Cardiac septum (tissue), 1 donor: ENCODE measurements at regions of chr6 and their contacts with region 1.

Region 1: DNA sequence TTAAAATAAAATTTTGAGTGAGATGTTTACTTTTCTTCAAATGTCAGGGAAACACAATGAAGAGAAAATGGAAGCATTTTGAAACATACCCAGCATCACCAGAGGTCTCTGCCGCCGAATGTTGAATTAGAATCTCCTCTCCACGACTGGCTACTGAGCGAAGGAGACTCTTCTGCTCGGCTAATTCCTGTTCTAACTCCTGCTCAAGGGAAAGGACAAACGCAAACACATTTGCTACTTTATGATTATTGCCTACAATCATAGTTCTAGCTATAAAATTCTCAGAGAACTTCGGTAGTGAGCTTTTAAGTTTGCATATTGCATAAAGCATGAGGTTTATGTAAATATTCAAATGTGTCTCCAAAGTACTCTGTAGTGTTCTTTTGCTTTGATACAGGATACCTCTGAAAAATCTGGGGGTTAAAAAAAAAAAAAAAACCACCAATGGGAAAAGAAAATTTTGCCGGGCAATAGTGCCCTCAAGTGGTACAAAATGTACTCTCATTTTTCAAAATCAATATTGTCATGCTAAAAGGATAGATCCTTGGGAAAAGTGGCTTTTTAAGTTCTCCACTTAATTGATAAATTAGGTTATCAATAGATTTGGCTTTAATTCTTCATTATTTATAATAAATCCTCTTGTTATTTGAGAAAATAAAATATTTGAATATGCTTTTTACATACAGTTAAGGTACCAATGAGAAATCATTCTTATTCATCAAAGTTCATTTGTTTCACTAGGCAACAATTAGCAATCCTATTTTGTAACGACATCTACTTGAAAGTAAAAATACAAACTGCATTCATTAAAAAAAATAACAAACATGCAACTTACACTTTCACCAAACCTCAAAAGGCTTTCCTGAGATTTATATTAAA is 369.0 kb downstream of the SYNE1 start:
- DNase-seq: no peak

Region 2: DNA sequence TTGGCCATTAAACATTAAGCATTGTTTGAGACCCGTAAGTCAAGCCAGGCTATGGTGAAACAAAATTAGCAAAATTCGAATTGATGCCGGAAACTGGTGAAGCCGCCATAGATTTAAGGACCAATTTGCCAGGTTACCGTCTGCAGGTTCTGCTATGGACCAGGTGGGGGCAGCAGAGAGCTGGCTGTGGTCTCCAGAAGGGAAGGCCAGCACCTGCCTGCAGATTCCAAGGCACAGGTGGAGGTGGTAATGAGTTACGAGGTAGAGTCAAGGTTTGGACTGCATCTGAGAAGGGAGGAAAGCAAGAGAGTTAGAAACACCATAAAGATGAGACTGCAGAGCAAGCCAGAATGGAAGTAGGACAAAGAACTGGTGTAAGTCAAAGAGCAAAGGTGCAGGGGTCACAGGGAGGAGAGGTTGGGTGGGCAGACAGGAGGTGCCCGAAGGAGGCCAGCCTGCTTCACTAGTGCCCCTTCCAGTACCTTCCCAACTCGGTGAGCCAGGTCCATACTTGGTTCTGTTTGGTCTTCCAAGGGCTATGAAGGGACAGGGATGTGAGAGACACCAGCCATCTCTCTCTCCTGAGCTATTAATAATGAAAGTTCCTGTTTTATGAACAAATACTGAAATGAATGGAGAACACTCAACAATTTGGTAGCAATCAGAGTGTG is 592.3 kb before region 1 on chr6:
- intact Hi-C with region 1: loop called (anchors 10 kb)
- DNase-seq: no peak

Region 3: GRCh38 chr6:151690768-151691562 is 577.2 kb before region 1 on chr6:
- intact Hi-C with region 1: no loop called
- DNase-seq: no peak

Region 4: GRCh38 chr6:151765444-151765886 is 502.7 kb before region 1 on chr6:
- intact Hi-C with region 1: loop called (anchors 5 kb)
- DNase-seq: no peak